SK-N-SH (cell line): ENCODE measurements at regions of chr1 and their contacts with region 1.

Region 1: GRCh38 chr1:15788624-15789301 is 18.7 kb downstream of the UQCRHL start:
- DNase-seq: no peak
- H3K4me3 ChIP-seq: no peak overlapping the region
- H3K27ac ChIP-seq: peak overlapping the region in 1 of 2 experiments; percentile 48; a peak in 1 of 4 replicates
- H3K4me1 ChIP-seq: peaks cover 0 to 2% of the 10 kb centered on the region in 2 experiments; a peak in 1 of 4 replicates
- H3K27me3 ChIP-seq: no peaks in the 10 kb centered on the region
- CTCF ChIP-seq: no peak
- EP300 ChIP-seq: no peak
- RAD21 ChIP-seq: no peak

Region 2: DNA sequence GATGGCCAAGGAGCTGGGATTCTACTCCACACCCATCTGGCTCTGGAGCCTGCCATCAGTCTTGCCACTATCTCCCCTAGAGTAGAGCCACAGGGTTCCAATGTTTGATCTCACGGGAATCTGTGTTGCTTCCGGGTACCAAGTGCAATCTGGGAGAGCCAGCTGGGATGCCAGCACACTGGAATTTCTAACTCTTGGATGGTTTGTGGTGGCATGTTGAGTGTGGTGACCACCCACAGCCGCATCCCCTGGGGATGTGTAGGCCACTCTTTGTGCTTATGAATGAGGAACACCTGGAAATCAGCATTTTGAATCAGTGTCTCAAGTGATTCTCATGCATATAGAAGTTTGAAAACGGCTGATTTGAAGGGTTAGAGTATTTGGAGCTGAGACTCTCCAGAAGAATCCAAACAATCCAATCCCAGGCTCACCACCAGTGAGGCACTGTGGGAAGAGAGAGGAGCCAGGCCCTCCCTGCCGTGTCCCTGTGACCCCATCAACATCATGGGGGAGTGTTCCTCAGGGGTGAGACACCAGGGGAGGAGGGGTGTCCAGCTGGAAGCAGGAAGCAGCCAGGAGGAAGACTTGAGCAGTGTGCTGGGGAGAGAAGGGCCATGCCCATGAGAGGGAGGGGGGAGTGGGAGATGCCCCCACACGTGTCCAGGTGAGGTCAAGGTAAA is 16.8 kb before region 1 on chr1:
- CTCF ChIA-PET with region 1: interaction called, 21 read pairs
- POLR2A ChIA-PET with region 1: no interaction called
- DNase-seq: no peak
- H3K4me3 ChIP-seq: no peak overlapping the region
- H3K27ac ChIP-seq: no peak overlapping the region
- H3K4me1 ChIP-seq: no peaks in the 10 kb centered on the region
- H3K27me3 ChIP-seq: no peaks in the 10 kb centered on the region
- CTCF ChIP-seq: no peak
- EP300 ChIP-seq: no peak
- RAD21 ChIP-seq: no peak

Region 3: GRCh38 chr1:15803354-15803753 is 14.6 kb after region 1 on chr1:
- CTCF ChIA-PET with region 1: interaction called, 28 read pairs
- POLR2A ChIA-PET with region 1: no interaction called
- DNase-seq: peak; percentile 45
- H3K4me3 ChIP-seq: no peak overlapping the region
- H3K27ac ChIP-seq: no peak overlapping the region
- H3K4me1 ChIP-seq: peaks cover 19 to 29% of the 10 kb centered on the region in 2 experiments; a peak in 3 of 4 replicates
- H3K27me3 ChIP-seq: no peaks in the 10 kb centered on the region
- CTCF ChIP-seq: peak; percentile 58
- EP300 ChIP-seq: no peak
- RAD21 ChIP-seq: peak; percentile 65

Region 4: GRCh38 chr1:15820478-15820877 is 31.7 kb after region 1 on chr1:
- CTCF ChIA-PET with region 1: interaction called, 17 read pairs
- POLR2A ChIA-PET with region 1: no interaction called
- DNase-seq: no peak
- H3K4me3 ChIP-seq: no peak overlapping the region
- H3K27ac ChIP-seq: no peak overlapping the region
- H3K4me1 ChIP-seq: no peaks in the 10 kb centered on the region
- H3K27me3 ChIP-seq: no peaks in the 10 kb centered on the region
- CTCF ChIP-seq: no peak
- EP300 ChIP-seq: no peak
- RAD21 ChIP-seq: no peak

Region 5: DNA sequence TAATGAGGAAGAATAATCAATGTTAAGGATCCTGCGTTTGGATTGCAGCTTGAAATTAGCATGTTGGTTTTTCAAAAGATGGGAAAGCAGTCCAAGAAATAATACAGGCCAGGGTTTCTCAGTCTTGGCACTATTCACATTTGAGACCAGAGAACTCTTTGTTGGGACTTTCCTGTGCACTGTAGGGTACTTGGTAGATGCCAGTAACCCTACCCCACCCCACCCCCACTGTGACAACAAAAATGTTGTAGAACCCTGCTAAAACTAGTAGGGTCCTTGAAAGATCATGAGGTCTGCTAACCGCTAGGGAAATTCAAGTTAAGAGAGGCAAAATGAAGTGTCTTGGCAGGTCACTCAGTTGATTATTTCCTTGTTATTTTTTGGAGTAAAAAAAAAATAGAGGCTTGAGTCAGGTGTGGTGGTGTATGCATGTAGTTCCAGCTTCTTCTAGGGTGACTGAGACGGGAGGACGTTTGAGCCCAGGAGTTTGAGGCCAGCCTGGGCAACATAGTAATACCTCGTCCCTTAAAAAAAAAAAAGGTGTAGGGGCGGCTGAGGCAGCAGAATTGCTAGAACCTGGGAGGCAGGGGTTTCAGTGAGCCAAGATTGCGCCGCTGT is 112.0 kb after region 1 on chr1:
- CTCF ChIA-PET with region 1: no interaction called
- POLR2A ChIA-PET with region 1: no interaction called
- DNase-seq: no peak
- H3K4me3 ChIP-seq: no peak overlapping the region
- H3K27ac ChIP-seq: no peak overlapping the region
- H3K4me1 ChIP-seq: peaks cover 0 to 17% of the 10 kb centered on the region in 2 experiments; a peak in 1 of 4 replicates
- H3K27me3 ChIP-seq: no peaks in the 10 kb centered on the region
- CTCF ChIP-seq: no peak
- EP300 ChIP-seq: no peak
- RAD21 ChIP-seq: no peak

Region 6: DNA sequence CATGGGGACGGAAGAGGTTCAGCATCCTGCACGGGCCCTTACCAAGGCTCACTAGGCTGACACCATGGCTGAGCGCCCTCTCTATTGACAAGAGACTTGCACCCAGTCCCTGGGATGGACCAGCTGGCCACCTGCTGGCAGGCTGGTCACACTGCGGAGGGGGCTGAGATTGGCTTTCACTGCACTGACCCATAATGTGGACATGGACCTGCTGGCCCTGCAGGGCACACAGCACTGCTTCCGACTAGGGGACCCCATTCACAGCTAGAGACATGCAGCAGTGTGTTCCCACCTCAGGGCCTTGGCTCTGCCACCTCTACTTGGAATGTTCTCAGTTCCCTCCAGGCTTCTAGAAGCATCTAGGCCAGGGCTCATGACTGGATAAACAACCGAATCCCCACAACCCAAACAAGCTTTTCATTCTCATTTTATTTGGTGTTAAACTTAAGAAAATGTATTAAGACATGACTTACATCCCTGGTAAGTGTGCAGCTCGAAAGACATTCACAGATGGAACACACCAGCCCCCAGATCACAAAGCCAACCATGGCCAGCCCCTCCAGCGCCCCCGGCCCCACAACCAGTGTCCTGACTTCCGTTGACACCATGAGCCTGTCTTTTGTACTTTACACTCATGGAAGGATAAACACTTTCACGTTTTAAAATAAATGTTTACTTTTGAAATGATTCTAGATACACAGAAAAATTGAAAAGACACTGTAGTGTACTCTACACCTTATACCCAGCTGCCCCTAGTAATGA is 206.0 kb after region 1 on chr1:
- CTCF ChIA-PET with region 1: interaction called, 46 read pairs
- POLR2A ChIA-PET with region 1: no interaction called
- DNase-seq: peak; percentile 86
- H3K4me3 ChIP-seq: no peak overlapping the region
- H3K27ac ChIP-seq: no peak overlapping the region
- H3K4me1 ChIP-seq: no peaks in the 10 kb centered on the region
- H3K27me3 ChIP-seq: no peaks in the 10 kb centered on the region
- CTCF ChIP-seq: peak; percentile 85
- EP300 ChIP-seq: no peak
- RAD21 ChIP-seq: peak; percentile 91

Region 7: DNA sequence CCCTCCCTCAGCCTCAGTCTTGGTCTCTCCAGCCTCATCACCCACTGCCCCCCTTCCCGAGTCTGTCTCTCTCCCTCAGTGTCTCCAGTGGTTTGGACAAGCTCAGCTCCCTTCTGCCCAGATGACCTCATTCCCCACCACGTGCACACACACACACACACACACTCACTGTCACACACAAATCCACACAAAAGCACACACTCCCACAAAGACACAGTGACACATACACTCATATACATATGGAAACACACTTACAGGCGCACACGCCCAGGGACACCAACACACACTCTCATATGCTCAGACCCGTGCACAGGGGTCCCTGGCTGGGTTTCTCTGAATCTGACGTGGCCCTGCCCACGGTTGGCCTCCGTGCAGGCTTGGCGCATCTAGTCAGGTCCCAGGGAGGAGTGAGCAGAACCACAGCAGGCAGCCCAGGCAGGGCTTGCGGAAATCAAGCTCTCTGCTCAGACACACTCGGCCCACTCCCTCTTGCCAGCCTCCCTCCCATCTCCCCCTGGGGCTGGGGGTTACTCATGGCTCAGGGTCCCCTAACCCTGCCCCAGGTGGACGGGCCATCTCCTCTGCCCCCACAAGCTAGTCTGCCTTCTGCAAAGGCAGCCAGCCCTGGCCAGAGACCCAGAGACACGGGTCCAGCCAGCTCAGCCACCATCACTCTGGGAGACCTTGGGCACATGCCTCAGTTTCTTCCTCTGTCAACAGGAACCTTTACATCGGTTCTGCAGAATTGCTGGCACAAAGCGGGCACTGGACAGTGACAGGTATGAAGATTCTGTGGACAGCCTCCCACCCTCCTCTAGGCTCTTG is 323.2 kb after region 1 on chr1:
- CTCF ChIA-PET with region 1: no interaction called
- POLR2A ChIA-PET with region 1: no interaction called
- DNase-seq: no peak
- H3K4me3 ChIP-seq: no peak overlapping the region
- H3K27ac ChIP-seq: peak overlapping the region in 1 of 2 experiments; percentile 42; a peak in 1 of 4 replicates
- H3K4me1 ChIP-seq: peaks cover 17 to 24% of the 10 kb centered on the region in 2 experiments; a peak in 3 of 4 replicates
- H3K27me3 ChIP-seq: no peaks in the 10 kb centered on the region
- CTCF ChIP-seq: no peak
- EP300 ChIP-seq: no peak
- RAD21 ChIP-seq: no peak